Activated CD8-positive, alpha-beta memory T cell treated with anti-CD3 and anti-CD28 coated beads, Interleukin-2, amount 10 ng/mL, durations not matched to agents 7 days and 5 days (primary cell): ENCODE measurements at regions of chr14 and their contacts with region 1.

Region 1: DNA sequence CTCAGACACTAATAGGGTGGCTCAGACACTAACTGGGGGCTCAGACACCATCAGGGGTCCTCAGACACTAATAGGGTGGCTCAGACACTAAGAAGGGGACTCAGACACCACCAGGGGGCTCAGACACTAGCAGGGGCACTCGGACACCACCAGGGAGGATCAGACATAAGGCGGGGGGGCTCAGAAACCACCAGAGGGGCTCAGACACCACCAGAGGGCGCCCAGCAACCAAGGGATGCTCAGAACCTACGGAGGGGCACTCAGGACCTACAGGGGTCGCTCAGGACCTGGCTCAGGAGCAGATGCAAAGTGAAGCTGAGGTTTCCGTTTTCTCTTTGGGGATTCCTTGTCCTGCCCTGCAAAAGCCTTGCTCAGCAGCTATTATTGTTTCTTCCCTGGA is 448.5 kb downstream of the TMEM121 start:
- DNase-seq: peak; percentile 81
- ATAC-seq: peak; percentile 95
- H3K4me3 Mint-ChIP-seq: no peak overlapping the region
- H3K27ac Mint-ChIP-seq: no peak overlapping the region
- H3K4me1 Mint-ChIP-seq: no peaks in the 10 kb centered on the region
- H3K27me3 Mint-ChIP-seq: peaks cover 13% of the 10 kb centered on the region

Region 2: DNA sequence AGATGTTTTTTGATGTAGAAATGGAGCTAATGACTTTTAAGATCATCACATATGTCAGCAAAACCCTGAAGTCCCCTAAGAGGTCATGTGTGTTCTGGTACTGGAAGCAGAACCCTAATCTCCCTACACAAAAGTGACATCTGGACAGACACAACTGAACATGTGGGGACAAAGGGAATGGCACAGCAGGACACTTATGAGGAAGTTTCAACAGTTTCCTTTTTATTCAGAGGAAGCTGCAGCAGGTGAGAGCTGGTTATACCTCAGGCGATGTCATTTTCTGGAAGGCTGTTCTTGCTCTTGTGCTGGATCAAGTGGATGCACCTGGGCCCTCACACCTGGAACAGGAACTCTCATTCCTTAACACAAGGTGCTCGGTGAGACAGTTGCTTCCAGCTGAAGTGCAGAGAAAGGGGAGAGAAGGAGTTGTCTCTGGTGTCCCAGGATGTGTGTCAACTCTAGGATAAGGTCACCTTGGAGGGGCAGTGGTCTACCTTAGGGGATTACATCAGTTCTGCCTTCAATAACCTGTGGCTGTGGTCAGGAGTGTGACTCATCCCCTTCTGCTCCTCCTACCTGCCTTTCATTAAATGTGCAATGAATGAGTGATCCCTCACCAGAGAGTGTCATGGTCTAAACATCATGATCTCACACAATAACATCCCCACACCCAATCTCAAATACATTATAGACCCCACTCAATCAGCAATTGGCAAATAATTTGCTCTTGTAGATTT is 14.8 kb after region 1 on chr14:
- CTCF ChIA-PET with region 1: interaction called, 15 read pairs
- DNase-seq: peak; percentile 79
- ATAC-seq: peak; percentile 67
- H3K4me3 Mint-ChIP-seq: no peak overlapping the region
- H3K27ac Mint-ChIP-seq: peak overlapping the region; percentile 6
- H3K4me1 Mint-ChIP-seq: peaks cover 70% of the 10 kb centered on the region
- H3K27me3 Mint-ChIP-seq: peaks cover 2% of the 10 kb centered on the region

Region 3: DNA sequence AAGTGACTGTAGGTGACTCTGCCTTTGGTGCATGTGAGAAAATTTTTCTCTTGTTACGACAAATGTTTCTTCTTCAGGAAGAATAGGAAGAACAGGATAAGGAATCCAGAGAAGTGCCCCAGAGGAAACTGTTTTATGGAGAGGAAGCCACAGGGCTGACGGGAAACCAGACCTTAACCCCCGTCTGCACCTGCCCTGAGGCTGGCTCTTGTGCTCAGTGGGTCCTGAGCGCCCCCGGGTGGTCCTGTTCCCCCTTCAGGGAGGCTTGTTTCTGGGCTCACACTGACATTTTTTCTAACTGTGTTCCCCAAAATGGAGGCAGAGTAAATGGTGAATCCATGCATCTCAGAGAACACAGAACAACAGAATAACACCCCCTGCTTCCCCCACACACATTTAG is 243.3 kb after region 1 on chr14:
- CTCF ChIA-PET with region 1: no interaction called
- DNase-seq: no peak
- ATAC-seq: no peak
- H3K4me3 Mint-ChIP-seq: no peak overlapping the region
- H3K27ac Mint-ChIP-seq: no peak overlapping the region
- H3K4me1 Mint-ChIP-seq: no peaks in the 10 kb centered on the region
- H3K27me3 Mint-ChIP-seq: peaks cover 50% of the 10 kb centered on the region